ENCODE measurements at regions of chr5 and their contacts with region 1.

Region 1: DNA sequence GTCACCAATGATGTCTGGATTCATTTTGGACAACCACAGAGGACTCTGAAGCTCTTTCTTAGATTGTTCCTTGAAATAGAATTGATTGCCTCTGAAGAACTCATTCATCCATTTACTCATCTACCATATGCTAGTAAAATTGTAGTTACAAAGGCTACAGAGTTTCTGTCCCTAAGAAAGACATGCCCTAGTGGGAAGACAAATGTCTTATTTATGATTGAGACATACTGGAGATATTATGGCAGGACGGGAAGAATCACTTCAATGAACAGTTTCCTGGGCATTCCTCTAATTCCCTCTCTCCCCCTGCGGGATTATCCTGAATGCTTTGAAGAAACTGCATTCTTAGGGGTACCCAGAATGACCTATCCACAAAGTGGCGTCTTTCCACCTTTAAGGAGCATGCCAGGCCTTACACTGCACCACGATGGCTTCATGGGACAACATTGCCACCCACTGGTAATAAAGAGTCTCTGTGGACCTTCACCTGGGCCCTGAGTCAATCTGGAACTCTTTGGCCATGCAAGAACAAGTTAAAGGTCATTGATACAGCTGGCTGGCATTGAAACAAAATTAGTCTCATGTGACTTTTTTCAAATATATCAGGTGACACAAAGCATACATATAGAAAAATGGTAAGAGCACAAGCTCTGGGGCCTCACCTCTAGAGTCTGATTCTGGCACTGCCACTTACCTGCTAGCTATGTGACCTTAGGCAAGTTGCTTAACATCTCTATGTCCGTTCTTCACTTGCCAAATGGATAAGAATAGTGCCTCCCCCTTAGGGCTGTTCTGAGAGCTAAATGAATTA is 32.1 kb downstream of the ANKRD55 start:
- DNase-seq: peak; percentile 58
- H3K4me3 ChIP-seq: no peak overlapping the region
- H3K27ac ChIP-seq: no peak overlapping the region
- H3K4me1 ChIP-seq: no peaks in the 10 kb centered on the region
- H3K27me3 ChIP-seq: no peaks in the 10 kb centered on the region
- CTCF ChIP-seq: peak; percentile 67 to 84

Region 2: DNA sequence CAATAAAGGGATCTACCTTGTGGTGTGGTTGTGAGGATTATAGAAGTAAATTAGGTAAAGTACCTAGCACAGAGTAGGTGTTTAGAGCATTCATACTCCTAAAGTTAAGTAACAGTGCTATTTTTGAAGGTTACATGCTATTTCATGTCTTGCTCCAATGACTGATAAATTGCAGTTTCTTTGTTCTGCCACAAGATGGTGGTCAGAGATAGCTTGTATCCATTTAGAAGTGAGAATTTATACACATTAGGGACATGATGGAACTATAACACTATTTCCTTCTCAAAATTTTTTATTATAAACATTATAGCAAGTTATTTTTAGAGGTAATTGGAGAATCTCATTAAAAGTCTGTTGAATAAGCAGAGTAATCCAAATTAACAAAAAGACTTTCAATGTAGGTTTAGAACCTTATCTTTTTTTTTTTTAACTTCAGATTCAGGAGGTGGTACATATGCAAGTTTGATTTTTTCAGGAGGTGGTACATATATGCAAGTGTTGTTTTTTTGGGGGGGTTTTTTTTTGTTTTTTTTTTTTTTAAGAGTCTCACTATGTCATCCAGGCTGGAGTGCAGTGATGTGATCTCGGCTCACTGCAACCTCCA is 876.1 kb before region 1 on chr5:
- CTCF ChIA-PET with region 1: no interaction called
- dilution Hi-C with region 1: no loop called
- in situ Hi-C with region 1: no loop called
- intact Hi-C with region 1: loop called (anchors 5 kb)
- DNase-seq: peak; percentile 26
- H3K4me3 ChIP-seq: no peak overlapping the region
- H3K27ac ChIP-seq: no peak overlapping the region
- H3K4me1 ChIP-seq: no peaks in the 10 kb centered on the region
- H3K27me3 ChIP-seq: no peaks in the 10 kb centered on the region
- CTCF ChIP-seq: peak; percentile 56 to 66

Region 3: GRCh38 chr5:55711968-55712859 is 488.8 kb before region 1 on chr5 and contains the start of gene SLC38A9:
- CTCF ChIA-PET with region 1: no interaction called
- dilution Hi-C with region 1: no loop called
- in situ Hi-C with region 1: no loop called
- intact Hi-C with region 1: loop called (anchors 5 kb)
- DNase-seq: peak; percentile 91
- H3K4me3 ChIP-seq: peak within 1 kb of the TSS; percentile 66 to 99 (median 98)
- H3K27ac ChIP-seq: peak within 1 kb of the TSS; percentile 75
- H3K4me1 ChIP-seq: peaks cover 18% of the 10 kb centered on the region
- H3K27me3 ChIP-seq: no peaks in the 10 kb centered on the region
- CTCF ChIP-seq: no peak
- total RNA-seq, gene SLC38A9: 23.0 to 62.5 TPM

Region 4: GRCh38 chr5:55936100-55936693 is 264.9 kb before region 1 on chr5:
- CTCF ChIA-PET with region 1: interaction called, 3 read pairs
- dilution Hi-C with region 1: no loop called
- in situ Hi-C with region 1: loop called in 1 of 2 experiments (anchors 10 kb)
- intact Hi-C with region 1: loop called (anchors 1 kb)
- DNase-seq: peak; percentile 63
- H3K4me3 ChIP-seq: no peak overlapping the region
- H3K27ac ChIP-seq: no peak overlapping the region
- H3K4me1 ChIP-seq: no peaks in the 10 kb centered on the region
- H3K27me3 ChIP-seq: no peaks in the 10 kb centered on the region
- CTCF ChIP-seq: peak; percentile 91 to 97

Region 5: GRCh38 chr5:56838409-56839039 is 637.5 kb after region 1 on chr5:
- CTCF ChIA-PET with region 1: no interaction called
- dilution Hi-C with region 1: no loop called
- in situ Hi-C with region 1: no loop called
- intact Hi-C with region 1: loop called (anchors 5 kb)
- DNase-seq: peak; percentile 58
- H3K4me3 ChIP-seq: peak overlapping the region in 2 of 3 experiments; percentile 12 to 25
- H3K27ac ChIP-seq: peak overlapping the region; percentile 27
- H3K4me1 ChIP-seq: peaks cover 5% of the 10 kb centered on the region
- H3K27me3 ChIP-seq: no peaks in the 10 kb centered on the region
- CTCF ChIP-seq: peak; percentile 32 to 57

Measured in mammary epithelial cell (primary cell).